ENCODE measurements at regions of chr12 and their contacts with region 1.

Region 1: GRCh38 chr12:127060310-127060847 is 1206.6 kb upstream of the TMEM132C start:
- DNase-seq: peak; percentile 88
- ATAC-seq: peak; percentile 41
- H3K4me3 ChIP-seq: peak overlapping the region; percentile 71
- H3K27ac ChIP-seq: peak overlapping the region; percentile 56
- H3K4me1 ChIP-seq: peaks cover 34% of the 10 kb centered on the region
- H3K27me3 ChIP-seq: no peaks in the 10 kb centered on the region
- CTCF ChIP-seq: no peak

Region 2: DNA sequence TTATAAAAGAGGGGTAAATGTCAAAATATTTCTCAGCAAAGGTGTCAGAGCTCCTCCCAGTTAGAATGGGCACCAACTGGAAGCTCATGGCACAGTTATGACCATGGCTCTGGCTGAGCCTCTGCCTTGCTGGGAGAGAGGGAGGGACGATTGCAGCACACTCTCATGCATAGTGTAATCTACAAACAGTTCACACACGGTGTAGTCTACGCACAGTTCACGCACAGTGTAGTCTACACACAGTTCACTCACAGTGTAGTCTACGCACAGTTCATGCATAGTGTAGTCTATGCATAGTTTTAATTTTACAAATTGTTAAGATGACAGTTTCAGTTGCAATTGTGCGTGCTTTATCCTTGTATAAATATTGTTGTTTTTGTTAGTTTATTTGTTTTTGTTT is 268.0 kb before region 1 on chr12:
- CTCF ChIA-PET with region 1: no interaction called
- POLR2A ChIA-PET with region 1: no interaction called
- intact Hi-C with region 1: no loop called
- DNase-seq: no peak
- ATAC-seq: no peak
- H3K4me3 ChIP-seq: no peak overlapping the region
- H3K27ac ChIP-seq: no peak overlapping the region
- H3K4me1 ChIP-seq: no peaks in the 10 kb centered on the region
- H3K27me3 ChIP-seq: peaks cover 69% of the 10 kb centered on the region
- CTCF ChIP-seq: no peak

Region 3: GRCh38 chr12:127025545-127025944 is 34.8 kb before region 1 on chr12:
- CTCF ChIA-PET with region 1: no interaction called
- POLR2A ChIA-PET with region 1: interaction called, 11 read pairs
- intact Hi-C with region 1: no loop called
- DNase-seq: peak; percentile 60
- ATAC-seq: peak; percentile 83
- H3K4me3 ChIP-seq: no peak overlapping the region
- H3K27ac ChIP-seq: no peak overlapping the region
- H3K4me1 ChIP-seq: no peaks in the 10 kb centered on the region
- H3K27me3 ChIP-seq: no peaks in the 10 kb centered on the region
- CTCF ChIP-seq: peak; percentile 72

Region 4: DNA sequence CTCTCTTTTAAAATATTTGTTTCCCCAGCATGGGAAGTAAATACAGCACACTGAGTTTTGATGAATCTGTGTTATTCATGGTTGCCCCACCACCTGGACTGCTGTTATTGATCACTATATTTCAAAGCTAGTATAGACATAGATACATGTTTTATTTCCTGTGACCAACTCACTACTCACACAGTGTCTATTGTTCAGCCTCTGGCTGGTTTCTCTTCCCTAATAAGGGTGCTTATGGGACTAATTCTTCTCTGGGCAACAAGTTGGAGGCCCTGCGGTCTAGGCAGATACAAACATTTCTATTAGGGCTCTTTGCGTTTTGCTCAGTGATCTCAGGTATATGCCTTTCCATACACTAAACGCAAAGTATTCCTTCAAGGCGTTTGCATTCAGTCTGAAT is 15.6 kb after region 1 on chr12:
- CTCF ChIA-PET with region 1: no interaction called
- POLR2A ChIA-PET with region 1: interaction called, 5 read pairs
- intact Hi-C with region 1: loop called (anchors 1 kb)
- DNase-seq: peak; percentile 68
- ATAC-seq: peak; percentile 83
- H3K4me3 ChIP-seq: no peak overlapping the region
- H3K27ac ChIP-seq: peak overlapping the region; percentile 54
- H3K4me1 ChIP-seq: peaks cover 30% of the 10 kb centered on the region
- H3K27me3 ChIP-seq: no peaks in the 10 kb centered on the region
- CTCF ChIP-seq: no peak

Region 5: GRCh38 chr12:127165567-127166392 is 105.4 kb after region 1 on chr12:
- CTCF ChIA-PET with region 1: no interaction called
- POLR2A ChIA-PET with region 1: no interaction called
- intact Hi-C with region 1: loop called (anchors 5 kb)
- DNase-seq: peak; percentile 82
- ATAC-seq: peak; percentile 91
- H3K4me3 ChIP-seq: peak overlapping the region; percentile 48; the same call in 1 of the 2 replicates
- H3K27ac ChIP-seq: peak overlapping the region; percentile 38
- H3K4me1 ChIP-seq: peaks cover 21% of the 10 kb centered on the region
- H3K27me3 ChIP-seq: no peaks in the 10 kb centered on the region
- CTCF ChIP-seq: no peak